ENCODE measurements at regions of chr10 and their contacts with region 1.

Region 1: GRCh38 chr10:97898429-97898828 is 48.8 kb downstream of the GOLGA7B start:
- DNase-seq: no peak
- H3K4me3 ChIP-seq: no peak overlapping the region
- H3K27ac ChIP-seq: no peak overlapping the region
- H3K4me1 ChIP-seq: no peaks in the 10 kb centered on the region
- H3K27me3 ChIP-seq: peaks cover 0 to 8% of the 10 kb centered on the region in 2 donors
- CTCF ChIP-seq: no peak
- POLR2A ChIP-seq: no peak

Region 2: DNA sequence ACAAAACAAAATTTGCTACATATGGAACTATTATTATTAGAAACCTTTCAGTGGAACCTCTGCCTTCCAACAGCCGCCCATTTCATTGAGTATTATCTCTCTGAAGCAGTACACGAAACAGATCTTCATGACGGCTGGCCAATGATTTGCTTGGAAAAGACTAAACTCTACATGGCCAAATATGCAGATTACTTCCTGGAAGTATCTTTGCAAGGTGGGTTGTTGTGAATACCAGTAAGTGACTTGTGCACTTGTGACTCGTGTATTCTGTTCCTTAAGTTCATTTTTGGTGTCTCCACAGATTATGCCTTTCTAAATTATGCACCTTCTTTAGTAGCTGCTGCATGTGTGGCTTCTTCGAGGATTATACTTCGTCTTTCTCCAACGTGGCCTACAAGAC is 1841.6 kb before region 1 on chr10:
- intact Hi-C with region 1: loop called (anchors 5 kb)
- DNase-seq: no peak
- H3K4me3 ChIP-seq: no peak overlapping the region
- H3K27ac ChIP-seq: no peak overlapping the region
- H3K4me1 ChIP-seq: no peaks in the 10 kb centered on the region
- H3K27me3 ChIP-seq: no peaks in the 10 kb centered on the region
- CTCF ChIP-seq: no peak
- POLR2A ChIP-seq: no peak

Region 3: DNA sequence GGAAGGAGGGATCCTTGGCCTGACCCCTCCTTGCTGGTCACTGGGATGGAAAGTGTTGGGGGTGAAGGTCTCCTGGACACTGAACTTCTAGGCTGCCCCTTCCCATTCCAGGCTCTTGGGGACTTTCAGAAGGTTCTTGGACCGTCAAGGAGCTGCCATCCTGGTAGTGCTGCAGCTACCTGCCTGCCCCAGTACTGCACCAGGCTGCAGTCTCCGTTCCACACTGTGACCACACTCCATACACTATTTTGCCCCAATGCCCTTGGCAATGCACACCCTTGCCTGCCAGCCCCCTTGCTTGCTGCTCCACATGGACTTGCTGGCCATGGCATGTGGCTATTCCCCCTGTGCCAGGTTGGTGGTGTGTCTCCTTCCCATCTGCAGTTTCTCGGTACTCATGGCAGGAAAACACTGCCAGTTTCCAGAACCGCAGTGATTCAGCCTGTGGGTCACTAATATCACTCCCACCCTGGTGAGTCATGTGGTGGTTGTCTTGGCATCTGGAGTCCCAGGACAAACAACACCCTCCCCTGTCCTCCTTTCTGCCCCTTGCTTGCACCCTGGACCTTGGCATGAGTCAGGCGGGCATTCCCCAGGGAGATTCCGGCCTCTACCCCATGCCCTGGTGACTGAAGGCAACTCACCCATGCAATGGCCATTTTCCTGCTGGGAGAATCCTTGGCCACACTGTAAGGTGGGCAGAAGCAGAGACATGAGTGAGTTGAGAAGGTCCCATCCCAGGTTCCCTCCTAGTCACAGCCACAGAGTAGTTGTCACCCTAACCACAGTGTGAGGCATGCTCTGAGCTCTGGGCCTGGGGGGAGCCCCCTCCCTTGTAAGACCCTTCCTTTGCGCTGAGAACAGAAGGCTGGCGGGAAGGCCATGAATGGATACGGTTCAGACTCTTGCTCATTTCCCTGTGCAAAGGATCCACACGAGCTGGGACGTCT is 16.0 kb before region 1 on chr10:
- intact Hi-C with region 1: no loop called
- DNase-seq: peak in 1 of 2 donors; percentile 44
- H3K4me3 ChIP-seq: no peak overlapping the region
- H3K27ac ChIP-seq: no peak overlapping the region
- H3K4me1 ChIP-seq: no peaks in the 10 kb centered on the region
- H3K27me3 ChIP-seq: no peaks in the 10 kb centered on the region
- CTCF ChIP-seq: no peak
- POLR2A ChIP-seq: no peak

Region 4: GRCh38 chr10:98195120-98195519 is 296.7 kb after region 1 on chr10:
- intact Hi-C with region 1: no loop called
- DNase-seq: no peak
- H3K4me3 ChIP-seq: no peak overlapping the region
- H3K27ac ChIP-seq: no peak overlapping the region
- H3K4me1 ChIP-seq: no peaks in the 10 kb centered on the region
- H3K27me3 ChIP-seq: no peaks in the 10 kb centered on the region
- CTCF ChIP-seq: no peak
- POLR2A ChIP-seq: no peak

Region 5: GRCh38 chr10:99444383-99445045 is 1546.1 kb after region 1 on chr10:
- intact Hi-C with region 1: loop called (anchors 5 kb)
- DNase-seq: no peak
- H3K4me3 ChIP-seq: no peak overlapping the region
- H3K27ac ChIP-seq: no peak overlapping the region
- H3K4me1 ChIP-seq: no peaks in the 10 kb centered on the region
- H3K27me3 ChIP-seq: peaks cover 0 to 4% of the 10 kb centered on the region in 2 donors
- CTCF ChIP-seq: no peak
- POLR2A ChIP-seq: no peak

Region 6: GRCh38 chr10:99698504-99699080 is 1800.2 kb after region 1 on chr10:
- intact Hi-C with region 1: no loop called
- DNase-seq: no peak
- H3K4me3 ChIP-seq: no peak overlapping the region
- H3K27ac ChIP-seq: no peak overlapping the region
- H3K4me1 ChIP-seq: no peaks in the 10 kb centered on the region
- H3K27me3 ChIP-seq: no peaks in the 10 kb centered on the region
- CTCF ChIP-seq: no peak
- POLR2A ChIP-seq: no peak